ENCODE measurements at regions of chr10 and their contacts with region 1.

Region 1: DNA sequence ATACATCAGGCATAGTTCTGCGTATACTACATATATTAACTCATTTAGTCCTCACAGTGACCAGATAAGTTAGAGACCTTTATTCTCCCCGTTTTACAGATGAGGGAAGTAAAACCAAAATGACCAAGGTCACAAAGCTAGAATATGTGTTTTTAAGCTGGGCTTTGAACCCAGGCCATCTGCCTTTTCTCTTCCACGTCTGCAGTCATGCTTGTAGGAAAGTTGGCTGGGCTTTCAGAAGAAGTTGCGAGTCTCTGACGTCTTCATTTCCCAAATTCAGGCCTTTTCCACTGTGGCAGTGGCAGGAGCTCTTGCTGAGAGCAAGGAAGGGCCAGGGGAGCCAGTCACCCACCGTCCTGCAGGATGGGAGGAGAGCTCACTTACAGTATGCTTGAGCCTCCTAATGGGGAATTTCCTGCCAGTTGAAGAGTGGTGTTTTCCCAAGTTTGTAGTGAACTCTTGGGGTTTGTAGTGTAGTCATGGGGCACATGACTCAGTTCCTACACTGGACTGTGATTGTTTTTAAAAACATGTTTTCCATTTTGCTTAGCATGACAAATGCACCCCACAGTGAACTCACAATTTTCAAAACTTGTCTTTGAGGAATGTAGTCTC is 34.2 kb downstream of the CYP17A1 start:
- DNase-seq: peak; percentile 79
- H3K4me3 ChIP-seq: no peak overlapping the region
- H3K27ac ChIP-seq: peak overlapping the region; percentile 94
- H3K27me3 ChIP-seq: no peaks in the 10 kb centered on the region
- CTCF ChIP-seq: 0 out of 2 replicates have a peak, but pooled peaks have one; percentile 10

Region 2: DNA sequence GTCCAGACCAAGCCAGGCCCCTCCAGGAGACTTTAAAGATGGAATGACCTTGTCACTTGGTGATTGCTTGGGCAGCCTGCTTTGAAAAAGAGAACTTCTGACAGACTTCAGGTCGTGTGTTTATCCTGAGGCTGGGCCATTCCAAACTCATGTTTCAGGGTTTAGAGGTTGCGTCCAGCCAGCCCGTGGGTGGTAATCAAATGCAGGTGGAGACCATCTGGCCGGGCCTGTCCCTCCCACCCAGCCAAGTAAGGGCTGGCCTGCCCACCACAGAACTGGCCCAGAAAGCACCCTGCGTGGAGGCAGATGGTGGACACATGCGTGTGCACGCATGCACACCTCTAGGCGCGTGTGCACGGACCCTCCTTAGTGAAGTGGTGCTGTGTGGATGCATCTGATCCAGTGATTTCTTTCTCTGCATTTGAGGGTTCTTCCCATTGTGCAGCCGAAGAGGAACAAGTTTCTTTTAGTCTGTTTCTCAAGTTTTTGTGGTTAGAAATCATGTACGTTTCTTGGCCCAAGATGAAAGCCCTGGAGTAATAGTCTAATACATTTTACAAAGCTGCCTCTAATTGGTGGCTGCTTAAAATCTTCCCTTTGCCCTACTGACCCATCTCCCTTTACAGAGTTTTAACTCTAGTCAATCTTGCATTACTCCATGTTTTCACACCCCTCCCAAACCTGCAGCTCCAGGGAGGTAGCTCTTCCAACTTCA is 256.3 kb before region 1 on chr10:
- CTCF ChIA-PET with region 1: no interaction called
- POLR2A ChIA-PET with region 1: no interaction called
- DNase-seq: peak; percentile 75
- H3K4me3 ChIP-seq: peak overlapping the region; percentile 35
- H3K27ac ChIP-seq: peak overlapping the region; percentile 85
- H3K27me3 ChIP-seq: no peaks in the 10 kb centered on the region
- CTCF ChIP-seq: no peak

Region 3: DNA sequence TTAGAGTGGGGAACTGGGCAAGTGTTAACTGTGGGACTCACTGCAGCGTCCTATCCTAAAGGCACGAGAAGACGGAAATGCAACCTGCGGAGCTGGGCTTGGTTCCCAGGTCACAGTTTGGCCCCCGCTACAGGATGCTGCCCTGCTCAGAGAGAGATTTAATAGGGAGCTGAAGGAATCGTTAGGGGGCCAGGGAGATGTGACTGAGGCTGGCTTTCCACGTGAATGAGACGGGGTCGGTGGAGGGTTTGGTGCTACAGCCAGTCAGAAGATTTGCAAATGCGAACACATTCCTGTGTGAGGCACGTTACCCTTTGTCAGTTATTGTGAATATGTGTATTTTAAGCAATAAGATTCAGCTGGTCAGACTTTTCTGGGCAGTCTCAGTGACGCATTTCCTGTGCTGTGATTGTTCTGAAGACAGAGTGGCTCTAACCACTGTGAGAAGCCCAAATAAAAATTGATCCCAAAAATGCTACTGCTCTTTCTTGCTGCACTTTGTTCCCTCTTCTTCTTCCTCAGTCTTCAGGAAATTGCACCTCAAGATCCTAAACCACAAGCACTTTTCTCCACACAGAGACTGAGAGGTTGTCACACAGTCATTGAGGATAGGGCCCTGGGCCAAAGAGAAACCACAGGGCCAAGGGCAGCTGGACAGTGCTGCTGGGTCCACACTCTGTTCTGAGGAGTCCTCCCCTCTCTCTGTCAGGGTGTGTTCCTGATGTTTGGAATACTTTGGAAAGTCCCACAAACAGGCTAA is 12.9 kb after region 1 on chr10:
- CTCF ChIA-PET with region 1: no interaction called
- POLR2A ChIA-PET with region 1: interaction called, 16 read pairs
- DNase-seq: peak; percentile 81
- H3K4me3 ChIP-seq: no peak overlapping the region
- H3K27ac ChIP-seq: peak overlapping the region; percentile 98
- H3K27me3 ChIP-seq: no peaks in the 10 kb centered on the region
- CTCF ChIP-seq: no peak